KBM-7 (cell line): ENCODE measurements at regions of chr10 and their contacts with region 1.

Region 1: DNA sequence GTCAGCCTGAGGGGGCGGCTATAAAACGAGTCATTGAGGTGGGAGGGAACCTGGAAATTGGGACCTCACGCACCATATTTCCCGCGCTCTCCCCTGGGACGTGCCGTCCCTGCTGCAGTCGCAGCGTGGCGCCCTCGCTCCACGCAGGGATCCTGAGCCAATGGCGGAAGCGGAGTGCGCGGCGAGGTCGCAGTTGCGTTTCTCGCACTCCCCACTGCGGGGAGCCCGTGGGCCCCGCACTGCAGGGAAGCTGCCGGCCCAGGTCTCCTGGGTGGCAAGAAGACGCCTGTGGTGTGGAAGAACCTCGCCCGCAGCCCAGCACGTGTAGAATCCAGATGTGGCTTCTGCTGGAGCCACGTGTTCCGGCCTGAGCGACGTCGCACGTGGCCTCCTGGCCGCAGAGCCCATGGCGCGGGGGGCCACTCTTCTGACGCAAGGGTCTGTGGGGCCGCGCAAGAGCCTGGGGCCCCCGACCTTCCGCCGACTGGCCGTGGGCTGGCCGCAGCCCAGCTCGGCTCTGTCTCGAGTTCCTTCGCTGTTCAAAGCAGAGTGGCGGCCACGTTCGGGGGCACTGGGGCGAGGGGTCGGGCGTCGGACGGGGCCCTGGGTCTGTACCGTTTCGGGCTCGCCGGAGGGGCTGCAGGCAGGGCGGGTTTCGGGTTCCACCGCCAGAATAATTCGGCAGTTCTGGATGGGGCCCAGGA is 26.4 kb downstream of the HIF1AN start:
- DNase-seq: peak; percentile 92

Region 2: DNA sequence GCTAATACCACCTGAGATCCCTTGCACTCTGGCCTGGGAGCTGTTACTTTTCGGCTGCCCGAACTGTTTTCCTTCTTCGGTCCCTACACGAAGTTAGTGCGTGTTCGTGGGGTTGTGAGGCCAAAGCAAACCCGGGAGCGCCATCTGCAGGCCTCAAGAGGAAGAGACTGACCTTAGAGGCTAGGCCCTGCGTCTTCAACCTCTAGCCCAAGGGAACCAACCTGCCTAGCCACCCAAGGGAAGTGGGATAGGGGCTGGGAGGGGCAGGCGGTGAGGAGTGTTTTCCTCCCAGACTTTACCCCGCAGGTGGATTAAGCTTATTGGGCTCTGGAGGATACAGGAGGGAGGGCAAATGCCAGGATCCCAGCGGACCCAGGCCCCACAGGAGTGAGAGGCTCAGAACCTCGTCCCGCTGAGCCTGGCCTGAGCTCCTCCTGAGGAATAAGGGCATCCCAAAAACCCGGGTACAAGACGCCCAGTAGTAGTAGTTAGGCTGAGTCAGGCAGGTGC is 181.5 kb after region 1 on chr10:
- in situ Hi-C with region 1: loop called (anchors 10 kb)
- DNase-seq: peak; percentile 80

Region 3: DNA sequence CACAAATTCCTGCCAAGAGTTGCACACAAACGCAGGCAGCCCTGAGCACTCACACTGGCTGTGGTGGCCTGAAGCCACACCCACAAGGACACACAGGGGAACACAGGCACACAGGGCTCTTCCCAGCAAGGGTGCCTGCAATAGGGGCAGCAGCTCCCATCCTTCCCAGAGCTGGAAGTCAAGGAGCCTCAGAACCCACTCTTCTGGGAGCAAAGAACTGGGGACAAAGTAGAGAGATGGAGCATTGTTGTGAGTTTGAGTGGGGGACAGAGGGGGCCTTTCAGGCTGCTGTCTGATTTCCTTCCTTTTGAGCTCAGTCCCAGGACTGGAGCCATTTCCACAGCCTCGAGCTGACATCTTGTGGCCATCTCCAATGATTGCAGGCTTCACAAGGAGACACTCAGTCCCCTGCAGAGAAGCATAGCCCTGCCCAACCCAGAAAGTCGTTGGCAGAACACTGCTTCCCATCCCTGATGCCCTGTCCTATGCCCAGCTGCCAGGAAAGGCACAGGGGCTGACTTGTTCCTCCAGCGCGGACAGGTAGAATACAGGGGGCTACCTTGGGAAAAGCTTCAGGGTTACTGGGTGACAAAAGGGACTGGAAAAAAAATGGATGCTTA is 316.2 kb after region 1 on chr10:
- in situ Hi-C with region 1: loop called (anchors 5 kb)
- DNase-seq: peak; percentile 80